ENCODE measurements at regions of chr15 and their contacts with region 1.

Region 1: GRCh38 chr15:90086868-90087268 is 15.4 kb downstream of the IDH2 start:
- DNase-seq: no peak
- H3K4me3 ChIP-seq: no peak overlapping the region
- H3K27me3 ChIP-seq: no peaks in the 10 kb centered on the region
- CTCF ChIP-seq: peak; percentile 79

Region 2: DNA sequence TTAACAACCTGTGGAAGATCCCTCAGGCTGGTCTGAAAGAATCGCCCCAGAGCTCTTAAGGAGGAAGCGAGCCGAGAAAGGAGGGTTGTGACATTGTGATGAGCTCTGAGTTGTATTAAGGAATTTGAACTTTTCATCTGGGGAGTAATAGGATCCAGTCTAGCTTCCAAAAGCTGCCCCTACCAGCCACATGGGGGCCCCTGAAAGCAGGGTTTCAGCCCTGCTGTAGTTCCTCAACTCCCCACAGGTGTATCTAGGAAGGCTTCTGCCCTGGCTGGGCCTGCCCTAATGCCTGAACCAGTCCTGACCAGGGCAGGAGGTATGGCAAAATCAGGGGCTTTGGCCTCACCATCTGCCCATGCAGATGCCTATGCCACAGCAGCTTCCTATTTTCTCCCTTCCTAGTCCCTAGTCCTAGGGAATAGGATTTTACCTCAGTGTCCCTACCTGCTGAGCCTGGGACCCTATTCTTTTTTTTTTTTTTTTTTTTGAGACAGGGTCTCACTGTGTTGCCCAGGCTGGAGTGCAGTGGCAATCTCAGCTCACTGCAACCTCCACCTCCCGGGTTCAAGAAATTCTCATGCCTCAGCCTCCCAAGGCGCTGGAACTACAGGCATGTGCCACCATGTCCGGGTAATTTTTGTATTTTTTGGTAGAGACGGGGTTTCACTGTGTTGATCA is 188.1 kb before region 1 on chr15:
- CTCF ChIA-PET with region 1: interaction called, 11 read pairs
- POLR2A ChIA-PET with region 1: no interaction called
- DNase-seq: no peak
- H3K4me3 ChIP-seq: no peak overlapping the region
- H3K27me3 ChIP-seq: no peaks in the 10 kb centered on the region
- CTCF ChIP-seq: peak; percentile 72